ENCODE measurements at regions of chr14 and their contacts with region 1.

Region 1: DNA sequence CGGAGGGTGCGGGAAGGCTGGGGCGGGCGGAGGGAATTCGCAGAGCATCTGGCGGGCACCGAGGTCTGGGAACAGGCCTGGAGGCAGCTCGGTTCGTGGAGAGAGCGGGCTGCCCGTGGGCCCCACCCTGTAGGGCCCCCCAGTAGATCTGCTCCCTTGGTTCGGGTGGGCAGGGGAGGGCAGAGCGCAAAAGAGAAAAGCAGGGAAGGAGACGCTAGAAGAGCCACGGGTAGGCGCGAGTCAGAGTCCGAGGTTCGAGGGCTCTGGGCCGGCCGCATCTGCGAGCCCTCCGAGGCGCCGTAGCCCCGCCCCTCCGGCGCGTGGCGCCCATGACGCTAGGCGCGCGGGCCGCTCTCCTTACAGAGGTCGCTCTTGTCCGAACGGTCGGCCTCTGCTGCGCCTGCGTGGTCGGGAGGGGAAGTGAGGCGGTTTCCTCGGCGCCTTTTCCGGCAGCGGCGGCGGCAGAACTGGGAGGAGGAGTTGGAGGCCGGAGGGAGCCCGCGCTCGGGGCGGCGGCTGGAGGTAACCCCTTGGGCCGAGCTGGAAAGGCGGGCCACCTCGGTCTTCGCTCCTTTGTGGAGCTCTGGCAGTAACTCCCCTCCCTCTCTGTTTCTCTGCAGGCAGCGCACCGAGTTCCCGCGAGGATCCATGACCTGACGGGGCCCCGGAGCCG is at the start of gene ARF6:
- DNase-seq: peak; percentile 97 to 100 (median 99)
- ATAC-seq: peak; percentile 97
- H3K4me3 ChIP-seq: peak within 1 kb of the TSS; percentile 94 to 96
- H3K27ac ChIP-seq: peak within 1 kb of the TSS; percentile 100
- H3K4me1 ChIP-seq: peaks cover 14 to 40% of the 10 kb centered on the region in 2 donors
- H3K27me3 ChIP-seq: no peaks in the 10 kb centered on the region
- CTCF ChIP-seq: peak in 1 of 2 donors; percentile 17
- polyA plus RNA-seq, gene ARF6: 46.8 to 59.6 (median 53.8) TPM

Region 2: DNA sequence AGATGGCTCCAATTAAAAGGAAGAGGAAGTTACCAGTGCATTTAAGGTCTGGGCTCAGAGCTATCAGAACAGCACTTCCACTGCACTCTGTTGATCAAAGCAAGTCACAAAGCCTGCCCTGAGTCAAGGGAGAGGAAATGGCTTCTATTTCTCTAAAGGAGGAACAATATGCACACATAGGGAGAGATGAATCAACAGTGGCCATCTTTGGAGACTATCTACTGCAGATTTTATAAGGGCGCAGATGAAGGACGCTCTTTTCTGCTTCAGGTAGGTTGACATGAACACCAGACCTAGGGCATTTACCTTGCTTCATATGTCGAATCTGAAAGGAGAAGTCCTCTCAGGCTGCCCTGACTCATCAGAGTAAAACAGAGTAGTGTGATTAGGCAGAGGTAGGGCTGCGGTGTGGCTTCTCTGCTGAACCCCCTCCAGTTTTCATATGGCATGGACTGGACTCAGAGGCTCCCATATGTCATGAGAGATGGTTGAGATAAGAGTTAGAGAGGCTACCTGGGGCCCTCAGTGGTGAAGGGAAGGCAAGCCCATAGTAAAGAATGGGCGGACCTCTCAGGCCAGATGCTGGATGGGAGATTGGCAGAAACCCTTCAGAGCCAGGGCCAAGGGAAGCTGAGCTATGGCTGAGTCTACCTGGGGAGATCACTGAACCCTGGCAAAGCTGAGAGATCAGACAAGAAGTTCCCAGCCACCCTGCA is 84.5 kb after region 1 on chr14:
- intact Hi-C with region 1: no loop called
- DNase-seq: no peak
- ATAC-seq: no peak
- H3K4me3 ChIP-seq: no peak overlapping the region
- H3K27ac ChIP-seq: peak overlapping the region in 1 of 2 donors; percentile 46
- H3K4me1 ChIP-seq: peaks cover 17 to 48% of the 10 kb centered on the region in 2 donors
- H3K27me3 ChIP-seq: no peaks in the 10 kb centered on the region
- CTCF ChIP-seq: no peak

Region 3: GRCh38 chr14:50003213-50004031 is 110.7 kb after region 1 on chr14:
- intact Hi-C with region 1: loop called in 1 of 2 experiments (anchors 5 kb)
- DNase-seq: peak; percentile 74 to 94 (median 88)
- ATAC-seq: peak; percentile 65
- H3K4me3 ChIP-seq: peak overlapping the region; percentile 44 to 45
- H3K27ac ChIP-seq: peak overlapping the region; percentile 94 to 96
- H3K4me1 ChIP-seq: peaks cover 40 to 64% of the 10 kb centered on the region in 2 donors
- H3K27me3 ChIP-seq: peaks cover 0 to 7% of the 10 kb centered on the region in 2 donors
- CTCF ChIP-seq: peak; percentile 22 to 33

Region 4: GRCh38 chr14:50013559-50014333 is 121.0 kb after region 1 on chr14:
- intact Hi-C with region 1: no loop called
- DNase-seq: no peak
- ATAC-seq: no peak
- H3K4me3 ChIP-seq: no peak overlapping the region
- H3K27ac ChIP-seq: no peak overlapping the region
- H3K4me1 ChIP-seq: peaks cover 0 to 4% of the 10 kb centered on the region in 2 donors
- H3K27me3 ChIP-seq: no peaks in the 10 kb centered on the region
- CTCF ChIP-seq: no peak

Measured in left lung (tissue), 14 donors.